ENCODE measurements at regions of chr3 and their contacts with region 1.

Region 1: DNA sequence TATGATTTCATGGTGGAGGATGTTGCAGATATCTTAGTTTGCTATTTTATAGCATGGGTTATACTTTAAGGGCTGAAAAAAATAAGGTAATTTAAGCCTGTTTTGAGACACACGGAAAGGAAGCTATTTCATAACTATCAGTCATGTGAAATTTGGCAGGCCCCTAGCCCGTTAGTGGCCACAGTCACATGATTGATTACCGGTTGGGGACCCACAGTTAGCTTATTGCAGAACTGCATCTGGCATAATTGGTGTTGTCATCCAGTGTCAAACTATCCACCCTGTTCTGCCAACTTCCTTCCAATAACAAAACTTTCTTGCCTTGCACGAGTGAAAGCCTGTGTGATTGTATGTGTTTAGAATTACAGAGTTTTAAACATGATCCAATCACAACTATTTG is 35.2 kb downstream of the FNDC3B start:
- DNase-seq: no peak
- ATAC-seq: no peak; the same call in 2 of the 3 replicates
- H3K4me3 ChIP-seq: no peak overlapping the region
- H3K27ac ChIP-seq: peak overlapping the region; percentile 15; the same call in 1 of the 3 replicates
- H3K4me1 ChIP-seq: peaks cover 3 to 59% of the 10 kb centered on the region in 2 experiments
- H3K27me3 ChIP-seq: no peaks in the 10 kb centered on the region
- CTCF ChIP-seq: no peak
- EP300 ChIP-seq: no peak
- POLR2A ChIP-seq: no peak
- RAD21 ChIP-seq: no peak

Region 2: DNA sequence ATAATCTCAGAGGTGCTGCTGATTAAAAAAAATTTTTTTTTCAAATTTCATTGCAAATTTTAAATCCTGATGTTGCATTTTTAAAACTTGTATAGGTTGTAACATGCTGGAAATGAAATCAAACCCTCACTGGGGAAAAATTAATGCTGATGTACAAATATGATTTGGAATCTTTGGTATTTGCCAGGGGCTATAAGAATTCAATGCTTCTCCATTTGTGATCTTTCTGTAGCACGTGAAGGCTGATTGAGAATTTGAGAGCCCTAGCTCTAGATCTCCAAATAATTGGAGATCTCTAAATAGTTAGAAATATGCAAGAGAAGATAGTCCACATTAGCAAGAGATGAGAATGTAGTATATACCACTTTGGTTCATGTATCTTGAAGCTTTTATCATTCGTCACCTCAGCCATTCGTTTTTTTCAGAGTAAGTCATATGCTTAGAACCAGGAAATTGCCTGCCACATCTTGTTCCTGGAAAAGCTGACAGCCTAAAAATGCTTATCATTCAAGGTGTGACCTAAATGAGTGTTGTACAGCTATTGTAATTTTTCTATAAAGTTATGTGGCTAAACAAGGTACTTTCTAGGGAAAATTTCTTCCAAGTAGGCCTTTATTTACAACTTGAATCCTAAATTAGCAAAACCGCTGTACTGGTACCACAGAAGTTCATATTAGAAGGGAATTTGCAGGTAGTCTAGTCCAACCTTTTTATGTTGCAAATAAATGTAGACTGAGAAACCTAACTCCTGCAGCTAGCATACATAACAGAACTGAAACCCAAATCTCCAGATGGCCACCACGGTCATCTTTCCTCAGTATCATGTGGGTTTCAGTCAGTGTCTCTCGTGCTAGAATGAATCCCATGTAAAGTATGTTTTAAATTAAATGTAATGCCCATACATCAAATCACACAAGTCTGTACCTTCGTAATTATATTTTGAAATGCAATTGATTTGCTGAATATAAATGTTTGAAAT is 13.3 kb after region 1 on chr3:
- CTCF ChIA-PET with region 1: no interaction called
- POLR2A ChIA-PET with region 1: interaction called, 15 read pairs
- in situ Hi-C with region 1: no loop called
- intact Hi-C with region 1: no loop called
- DNase-seq: peak in 2 of 4 experiments; percentile 41 to 78
- ATAC-seq: peak; percentile 63
- H3K4me3 ChIP-seq: no peak overlapping the region
- H3K27ac ChIP-seq: peak overlapping the region; percentile 83
- H3K4me1 ChIP-seq: peaks cover 0 to 35% of the 10 kb centered on the region in 2 experiments; a peak in 3 of 5 replicates
- H3K27me3 ChIP-seq: no peaks in the 10 kb centered on the region
- CTCF ChIP-seq: no peak
- EP300 ChIP-seq: peak; percentile 52; the same call in 1 of the 2 replicates
- POLR2A ChIP-seq: no peak
- RAD21 ChIP-seq: no peak; a peak in 1 of 4 replicates

Region 3: DNA sequence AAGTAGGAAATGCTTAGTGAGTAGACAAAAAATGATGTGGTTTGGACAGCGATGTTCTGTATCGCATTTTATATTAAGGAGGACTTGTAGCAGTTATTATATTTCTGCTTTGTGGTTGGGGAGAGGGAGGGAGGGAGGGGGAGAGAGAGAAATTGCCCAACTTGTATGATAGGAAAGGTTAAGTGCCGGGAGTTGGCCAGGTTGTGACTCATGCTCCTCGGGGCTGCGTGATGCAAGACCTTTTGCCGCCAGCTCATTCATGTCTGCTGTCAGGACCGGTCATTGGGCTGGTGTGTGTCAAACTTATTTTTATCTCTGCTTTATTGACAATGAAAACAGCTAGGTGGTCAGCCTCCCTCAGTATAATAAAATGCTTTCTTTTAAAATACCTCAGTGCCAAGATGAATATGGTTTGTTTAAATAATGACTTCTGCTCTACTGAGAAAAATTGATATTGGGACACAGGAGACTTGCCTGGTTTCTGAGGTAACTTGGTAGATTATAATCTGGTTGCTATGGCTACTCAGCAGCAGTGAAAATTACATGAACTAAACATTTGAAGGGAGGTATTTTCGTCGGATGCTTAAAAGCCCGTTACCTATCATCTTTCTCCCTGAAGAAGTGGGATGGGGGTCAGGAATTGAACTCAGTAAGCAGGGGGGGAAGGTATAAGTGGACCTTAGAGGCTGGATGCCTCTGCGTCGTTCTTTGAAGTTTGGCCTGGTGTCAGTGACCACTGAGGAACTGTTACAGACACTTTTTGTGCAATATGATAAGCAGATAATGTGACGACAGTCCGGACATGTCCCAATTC is 55.5 kb after region 1 on chr3:
- CTCF ChIA-PET with region 1: no interaction called
- POLR2A ChIA-PET with region 1: no interaction called
- in situ Hi-C with region 1: no loop called
- intact Hi-C with region 1: loop called (anchors 2 kb)
- DNase-seq: peak; percentile 81 to 93 (median 86)
- ATAC-seq: peak; percentile 97
- H3K4me3 ChIP-seq: no peak overlapping the region
- H3K27ac ChIP-seq: peak overlapping the region; percentile 79
- H3K4me1 ChIP-seq: peaks cover 4 to 15% of the 10 kb centered on the region in 2 experiments; a peak in 4 of 5 replicates
- H3K27me3 ChIP-seq: no peaks in the 10 kb centered on the region
- CTCF ChIP-seq: no peak
- EP300 ChIP-seq: peak; percentile 89
- POLR2A ChIP-seq: no peak
- RAD21 ChIP-seq: no peak; a peak in 1 of 4 replicates